Common myeloid progenitor, CD34-positive (primary cell): ENCODE measurements at regions of chr17 and their contacts with region 1.

Region 1: DNA sequence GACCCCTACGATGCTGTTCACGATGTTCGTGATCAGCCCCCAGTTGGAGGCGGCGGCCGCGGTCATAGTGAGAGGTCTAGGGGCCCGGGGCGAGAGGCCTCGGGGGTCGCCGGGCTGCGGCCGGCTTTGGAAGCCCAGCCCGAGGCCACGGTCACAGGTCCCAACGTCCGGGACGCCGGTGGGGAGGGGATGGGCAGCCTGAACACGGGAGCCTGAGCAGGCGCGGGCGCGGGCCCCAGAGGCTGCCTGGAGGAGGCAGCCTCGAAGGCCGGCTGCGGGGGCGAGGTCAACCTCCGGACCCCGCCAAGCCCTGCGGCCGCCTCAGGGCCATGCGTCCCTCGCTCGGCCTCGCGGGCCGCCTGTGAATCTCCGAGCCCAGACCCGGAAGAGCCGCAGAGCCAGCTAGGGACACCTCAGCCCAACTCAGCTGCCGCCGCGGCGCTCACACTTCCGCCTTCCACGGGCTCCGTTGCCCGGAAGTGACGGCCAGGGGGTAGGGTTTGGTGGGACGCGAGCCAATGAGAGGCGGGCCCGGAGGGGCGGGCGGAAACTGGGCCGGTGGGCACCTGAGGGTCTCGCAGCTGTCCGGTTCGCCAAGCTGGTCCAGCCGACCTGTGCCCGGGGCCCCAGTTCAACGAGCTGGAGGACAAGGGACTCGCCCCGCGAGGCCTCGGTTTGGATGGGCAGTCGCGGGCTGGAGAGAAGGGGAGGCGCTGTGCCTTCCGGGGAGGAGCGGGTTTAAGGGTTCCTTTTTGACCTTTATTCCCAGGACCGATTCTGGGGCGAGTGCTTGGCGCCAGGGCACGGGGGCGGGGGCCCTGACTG is at the start of gene SLC38A10:
- DNase-seq: peak; percentile 87 to 92 (median 91)
- H3K4me3 ChIP-seq: peak within 1 kb of the TSS; percentile 68 to 97 (median 92)
- H3K27ac ChIP-seq: peak within 1 kb of the TSS; percentile 75 to 93
- H3K4me1 ChIP-seq: peaks cover 2 to 38% (median 20%) of the 10 kb centered on the region in 4 experiments
- H3K27me3 ChIP-seq: no peaks in the 10 kb centered on the region

Region 2: GRCh38 chr17:81142301-81143199 is 152.5 kb before region 1 on chr17:
- CTCF ChIA-PET with region 1: no interaction called
- POLR2A ChIA-PET with region 1: no interaction called
- DNase-seq: peak; percentile 73 to 85 (median 81)
- H3K4me3 ChIP-seq: no peak overlapping the region
- H3K27ac ChIP-seq: no peak overlapping the region
- H3K4me1 ChIP-seq: peaks cover 0 to 3% (median 1%) of the 10 kb centered on the region in 4 experiments
- H3K27me3 ChIP-seq: no peaks in the 10 kb centered on the region

Region 3: DNA sequence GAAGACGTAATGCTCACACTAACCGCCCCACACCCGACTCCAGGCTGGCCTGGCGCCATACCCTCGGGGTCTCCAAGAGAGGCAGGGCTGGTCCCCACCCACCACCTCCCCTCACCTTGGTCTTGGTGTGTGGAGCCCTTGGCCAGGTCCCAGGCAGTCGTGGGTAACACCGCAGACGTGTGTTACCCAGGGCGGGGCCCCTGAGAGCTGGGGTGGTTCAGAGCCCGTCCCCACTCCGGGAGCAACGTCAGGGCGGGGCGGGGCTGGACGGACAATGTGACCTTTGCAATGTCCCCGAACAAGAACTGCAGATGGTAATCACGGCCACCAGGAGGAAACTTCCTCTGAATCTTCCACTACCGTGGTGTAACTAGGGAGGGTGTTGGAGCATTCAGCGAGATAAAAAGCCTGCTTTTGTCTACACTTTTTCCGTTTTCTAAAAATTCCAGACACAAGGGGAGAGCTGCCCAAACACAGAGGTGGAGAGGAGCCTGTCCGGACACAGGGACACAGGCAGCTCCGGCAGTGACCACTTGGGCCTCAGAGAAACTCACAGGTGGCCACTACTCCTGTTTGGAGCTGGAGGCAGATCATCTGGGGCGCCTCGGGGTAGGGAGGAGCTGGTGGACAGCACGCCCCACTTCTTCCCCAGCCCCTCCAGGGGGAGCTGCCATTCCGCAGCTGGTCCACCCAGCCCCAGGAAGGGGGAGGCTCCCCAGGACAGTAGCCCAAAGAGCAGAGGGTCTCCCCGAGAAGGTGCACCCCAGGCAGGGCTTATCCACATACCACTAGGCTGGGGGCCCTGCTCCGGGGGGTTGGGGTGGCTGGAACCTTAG is 14.2 kb after region 1 on chr17:
- CTCF ChIA-PET with region 1: interaction called, 11 read pairs
- POLR2A ChIA-PET with region 1: interaction called, 3 read pairs
- DNase-seq: peak; percentile 70 to 84 (median 78)
- H3K4me3 ChIP-seq: peak overlapping the region in 3 of 7 experiments; percentile 5 to 54 (median 44)
- H3K27ac ChIP-seq: peak overlapping the region in 1 of 2 experiments; percentile 49
- H3K4me1 ChIP-seq: peaks cover 0 to 12% (median 11%) of the 10 kb centered on the region in 4 experiments
- H3K27me3 ChIP-seq: no peaks in the 10 kb centered on the region

Region 4: DNA sequence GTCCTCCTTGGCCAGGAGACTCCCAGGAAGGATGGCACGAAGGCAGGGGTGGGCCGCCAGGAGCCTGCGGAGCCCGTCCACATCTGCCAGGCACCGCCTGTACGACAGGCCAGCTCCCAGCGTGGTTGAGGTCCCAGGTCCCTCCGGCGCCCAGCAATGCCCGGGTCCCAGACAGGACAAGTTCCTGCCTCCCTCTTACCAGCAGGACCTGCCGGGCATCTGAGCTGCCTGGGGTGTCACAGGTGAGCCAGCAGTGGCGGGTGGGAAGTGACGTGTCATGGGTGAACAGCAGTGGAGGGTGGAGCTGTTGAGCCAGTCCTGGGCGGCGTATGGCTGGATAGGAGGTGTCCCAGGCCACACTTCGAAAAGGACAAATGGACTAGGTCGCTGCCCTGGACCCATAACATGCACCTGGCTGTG is 84.5 kb after region 1 on chr17:
- CTCF ChIA-PET with region 1: no interaction called
- POLR2A ChIA-PET with region 1: no interaction called
- DNase-seq: no peak
- H3K4me3 ChIP-seq: no peak overlapping the region
- H3K27ac ChIP-seq: no peak overlapping the region
- H3K4me1 ChIP-seq: no peaks in the 10 kb centered on the region
- H3K27me3 ChIP-seq: no peaks in the 10 kb centered on the region